H1 (cell line): ENCODE measurements at regions of chrX and their contacts with region 1.

Region 1: GRCh38 chrX:49191033-49191871 is 5.1 kb upstream of the PRICKLE3 start:
- DNase-seq: peak; percentile 74 to 97
- H3K4me3 ChIP-seq: peak overlapping the region; percentile 51 to 87 (median 61)
- H3K27ac ChIP-seq: peak overlapping the region; percentile 77; the same call in 1 of the 2 replicates
- H3K4me1 ChIP-seq: peaks cover 0 to 4% (median 3%) of the 10 kb centered on the region in 4 experiments; a peak in 4 of 7 replicates
- H3K27me3 ChIP-seq: no peaks in the 10 kb centered on the region
- CTCF ChIP-seq: no peak
- EP300 ChIP-seq: no peak
- POLR2A ChIP-seq: peak in 1 of 2 experiments; percentile 77; a peak in 2 of 3 replicates
- RAD21 ChIP-seq: no peak

Region 2: DNA sequence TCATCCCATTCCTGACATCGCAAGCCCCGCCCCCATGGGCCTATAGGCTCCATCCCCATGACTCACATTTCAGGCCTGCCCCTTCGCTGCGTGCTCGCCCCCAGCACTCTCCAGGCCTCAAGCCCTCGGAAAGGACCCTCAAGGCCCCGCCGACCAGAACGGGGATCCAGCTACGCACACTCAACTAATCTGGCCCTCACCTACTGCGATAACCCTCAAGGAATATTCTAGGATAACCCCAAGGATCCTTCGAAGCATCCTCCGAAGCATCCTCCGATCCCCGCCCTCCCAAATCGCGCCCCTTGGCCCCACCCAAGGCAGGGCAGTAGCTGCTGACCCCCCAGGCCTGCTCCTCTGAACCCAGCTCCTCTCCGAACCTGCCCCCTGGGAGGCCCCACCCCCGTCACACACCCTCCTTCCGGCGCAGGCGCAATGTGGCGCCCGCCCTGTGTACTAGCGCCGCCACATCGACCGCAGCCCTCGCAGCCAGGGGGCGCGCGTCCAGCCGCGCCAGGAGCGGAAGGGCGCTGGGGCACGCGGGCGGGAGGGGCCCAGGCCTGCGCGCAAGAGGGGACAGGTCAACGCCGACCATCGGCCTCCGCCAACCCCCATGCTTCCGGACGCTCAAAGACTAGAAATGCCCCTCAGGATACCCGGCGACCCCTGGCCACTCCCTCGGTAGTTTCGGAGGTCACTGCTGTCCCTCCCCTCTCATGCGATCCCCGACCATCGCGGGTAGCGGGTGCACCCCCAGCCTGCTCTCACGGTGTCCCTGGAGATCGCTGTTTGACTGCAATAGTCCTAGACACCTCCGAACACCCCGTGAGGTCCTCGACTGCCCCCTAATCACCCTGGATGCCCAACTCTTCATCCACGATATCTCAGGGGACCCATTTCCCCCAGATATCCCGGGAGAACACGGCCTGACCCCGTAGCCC is 35.1 kb before region 1 on chrX:
- CTCF ChIA-PET with region 1: interaction called, 10 read pairs
- POLR2A ChIA-PET with region 1: interaction called, 3 read pairs
- DNase-seq: peak in 1 of 2 experiments; percentile 78
- H3K4me3 ChIP-seq: peak overlapping the region; percentile 45 to 77 (median 48)
- H3K27ac ChIP-seq: peak overlapping the region; percentile 85; the same call in 1 of the 2 replicates
- H3K4me1 ChIP-seq: peaks cover 0 to 4% (median under 1%) of the 10 kb centered on the region in 4 experiments; a peak in 3 of 7 replicates
- H3K27me3 ChIP-seq: peaks cover 1 to 6% (median 3%) of the 10 kb centered on the region in 4 experiments; a peak in 4 of 7 replicates
- CTCF ChIP-seq: peak in 2 of 3 experiments; percentile 64 to 65; a peak in 3 of 4 replicates
- EP300 ChIP-seq: no peak
- POLR2A ChIP-seq: peak in 1 of 2 experiments; percentile 46; a peak in 1 of 3 replicates
- RAD21 ChIP-seq: peak in 1 of 2 experiments; percentile 35; a peak in 1 of 4 replicates

Region 3: DNA sequence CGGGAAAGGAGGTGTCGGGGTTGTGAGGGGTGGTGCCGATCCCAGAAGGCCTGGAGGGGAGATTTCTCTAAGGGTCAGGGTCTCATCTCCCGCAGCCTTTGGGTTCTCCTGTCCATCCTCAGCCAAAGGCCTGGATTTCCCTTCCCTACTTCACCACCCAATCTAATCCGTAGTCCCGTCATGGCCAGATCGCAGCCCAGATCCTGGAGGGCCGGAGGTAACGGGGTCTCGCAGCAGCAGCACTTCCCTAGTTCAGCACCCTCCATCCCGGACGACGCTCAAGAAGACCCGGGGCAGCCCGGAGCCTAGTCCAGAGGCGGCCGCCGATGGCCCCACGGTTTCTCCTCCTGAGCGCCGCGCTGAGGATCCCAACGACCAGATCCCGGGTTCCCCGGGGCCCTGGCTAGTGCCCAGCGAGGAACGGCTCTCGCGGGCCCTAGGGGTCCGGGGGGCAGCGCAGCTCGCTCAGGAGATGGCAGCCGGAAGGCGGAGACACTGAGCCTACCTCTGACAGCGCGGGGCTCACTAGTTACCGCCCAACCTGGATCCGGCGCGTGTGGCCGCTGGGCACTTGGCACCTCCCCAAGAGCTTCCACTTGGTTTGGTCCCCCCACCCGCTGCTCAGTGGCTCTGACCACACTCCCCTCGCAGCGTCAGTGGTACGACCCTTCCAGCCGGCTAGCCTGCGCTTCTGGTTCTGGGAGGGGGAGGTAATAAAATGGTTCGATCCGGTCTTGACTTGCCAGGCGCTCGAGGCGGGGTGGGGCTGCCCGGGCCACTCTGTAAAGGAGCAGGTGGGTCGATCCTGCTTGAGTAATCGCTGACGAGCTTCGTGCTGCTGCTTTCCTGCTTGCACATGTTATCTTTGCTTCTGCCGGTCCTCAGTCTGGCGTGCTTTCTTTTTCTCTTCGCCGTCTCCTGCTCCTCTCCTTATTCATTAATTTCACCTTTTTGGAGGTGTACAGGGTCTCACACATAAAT is 25.1 kb before region 1 on chrX:
- CTCF ChIA-PET with region 1: interaction called, 14 read pairs
- POLR2A ChIA-PET with region 1: interaction called, 4 read pairs
- DNase-seq: peak; percentile 81 to 83
- H3K4me3 ChIP-seq: peak overlapping the region; percentile 32 to 58 (median 41); a peak in 7 of 8 replicates
- H3K27ac ChIP-seq: no peak overlapping the region
- H3K4me1 ChIP-seq: peaks cover 0 to 12% (median 4%) of the 10 kb centered on the region in 4 experiments; a peak in 4 of 7 replicates
- H3K27me3 ChIP-seq: peaks cover 0 to 8% (median 4%) of the 10 kb centered on the region in 4 experiments; a peak in 4 of 7 replicates
- CTCF ChIP-seq: peak in 2 of 3 experiments; percentile 21 to 37; a peak in 3 of 4 replicates
- EP300 ChIP-seq: peak in 1 of 2 experiments; percentile 99; a peak in 2 of 3 replicates
- POLR2A ChIP-seq: no peak
- RAD21 ChIP-seq: peak; percentile 2 to 23; a peak in 2 of 4 replicates

Region 4: DNA sequence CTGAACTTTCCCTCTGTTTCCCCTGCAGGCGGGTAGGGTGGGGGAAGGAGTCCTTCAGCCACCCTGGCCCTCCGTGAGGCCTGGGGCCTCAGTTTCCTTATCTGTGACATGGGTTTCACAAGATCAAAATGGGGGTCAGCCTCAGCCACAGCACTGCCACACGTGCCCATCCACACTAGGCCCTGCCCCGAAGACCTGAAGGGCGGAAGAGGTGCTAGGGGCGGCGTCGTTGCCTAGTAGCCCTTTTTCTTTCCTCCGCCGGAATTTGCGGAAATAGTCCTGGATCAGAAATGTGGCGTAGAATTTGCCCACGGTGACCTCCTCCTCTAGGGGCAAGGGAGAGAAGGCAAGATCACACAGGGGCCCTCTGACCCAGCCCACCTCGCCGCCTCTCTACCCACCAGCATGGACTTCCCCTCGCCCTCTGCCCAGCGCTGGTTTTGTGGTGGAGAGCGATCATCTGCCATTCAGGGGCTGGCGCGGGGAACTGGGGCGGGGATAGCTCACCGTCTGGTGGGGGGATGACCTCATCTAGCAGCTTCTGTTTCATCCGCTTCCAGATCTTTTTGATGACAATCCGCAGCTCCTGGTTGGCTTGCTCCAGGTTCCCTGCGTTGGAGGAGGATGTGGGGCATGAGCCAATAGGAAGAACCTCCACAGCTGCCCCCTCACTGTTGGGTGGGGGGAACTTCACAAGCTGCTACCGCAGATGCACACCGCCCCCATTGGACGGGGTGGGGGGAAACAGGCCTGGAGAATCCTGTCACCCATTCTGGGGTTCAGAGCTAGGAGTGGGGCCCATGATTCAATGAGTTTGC is 18.4 kb after region 1 on chrX:
- CTCF ChIA-PET with region 1: interaction called, 22 read pairs
- POLR2A ChIA-PET with region 1: interaction called, 4 read pairs
- DNase-seq: no peak
- H3K4me3 ChIP-seq: peak overlapping the region in 1 of 4 experiments; percentile 21; a peak in 1 of 8 replicates
- H3K27ac ChIP-seq: no peak overlapping the region
- H3K4me1 ChIP-seq: peaks cover 0 to 11% (median 2%) of the 10 kb centered on the region in 4 experiments; a peak in 2 of 7 replicates
- H3K27me3 ChIP-seq: no peaks in the 10 kb centered on the region
- CTCF ChIP-seq: peak in 1 of 3 experiments; percentile 5; a peak in 2 of 4 replicates
- EP300 ChIP-seq: no peak
- POLR2A ChIP-seq: no peak
- RAD21 ChIP-seq: peak in 1 of 2 experiments; percentile 19; a peak in 2 of 4 replicates

Region 5: DNA sequence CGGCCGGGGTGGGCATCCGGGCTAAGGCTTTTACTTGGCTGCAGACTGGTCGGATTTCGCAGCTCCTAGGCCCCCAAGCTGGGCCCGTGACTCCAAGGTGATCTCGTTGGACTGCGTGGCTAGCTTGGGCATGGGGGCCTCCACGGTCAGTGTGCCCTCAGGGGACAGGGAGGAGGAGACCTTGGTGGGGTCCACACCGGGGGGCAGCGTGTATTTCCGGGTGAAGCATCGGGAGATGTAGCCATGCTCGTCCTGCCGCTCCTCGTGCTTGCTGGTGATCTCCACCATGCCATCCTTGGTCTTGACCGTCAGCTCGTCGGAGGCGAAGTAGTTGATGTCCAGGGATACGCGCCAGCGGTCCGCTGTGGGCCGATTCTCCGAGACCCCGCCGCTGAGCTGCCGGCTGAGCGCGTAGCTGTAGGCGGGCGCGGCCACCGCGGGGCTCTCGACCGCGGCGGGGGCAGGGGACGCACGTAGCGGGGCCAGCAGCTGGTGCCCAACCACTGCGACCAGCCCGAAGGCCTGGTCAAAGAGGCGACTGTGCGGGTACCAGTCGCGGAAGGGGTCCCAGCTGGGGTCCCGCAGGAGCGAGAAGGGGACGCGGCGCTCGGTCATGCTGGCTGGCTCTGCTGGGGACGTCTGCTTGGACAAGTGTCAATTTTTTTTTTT is 42.8 kb after region 1 on chrX:
- CTCF ChIA-PET with region 1: interaction called, 11 read pairs
- POLR2A ChIA-PET with region 1: no interaction called
- DNase-seq: no peak
- H3K4me3 ChIP-seq: no peak overlapping the region
- H3K27ac ChIP-seq: no peak overlapping the region
- H3K4me1 ChIP-seq: peaks cover 0 to 6% (median 1%) of the 10 kb centered on the region in 4 experiments; a peak in 2 of 7 replicates
- H3K27me3 ChIP-seq: no peaks in the 10 kb centered on the region
- CTCF ChIP-seq: no peak
- EP300 ChIP-seq: no peak
- POLR2A ChIP-seq: no peak
- RAD21 ChIP-seq: no peak

Region 6: GRCh38 chrX:49269010-49269767 is 77.9 kb after region 1 on chrX:
- CTCF ChIA-PET with region 1: interaction called, 3 read pairs
- POLR2A ChIA-PET with region 1: interaction called, 10 read pairs
- DNase-seq: peak; percentile 83 to 85
- H3K4me3 ChIP-seq: peak overlapping the region; percentile 47 to 99 (median 73)
- H3K27ac ChIP-seq: peak overlapping the region; percentile 95
- H3K4me1 ChIP-seq: peaks cover 0 to 14% (median 5%) of the 10 kb centered on the region in 4 experiments; a peak in 4 of 7 replicates
- H3K27me3 ChIP-seq: no peaks in the 10 kb centered on the region
- CTCF ChIP-seq: no peak
- EP300 ChIP-seq: no peak
- POLR2A ChIP-seq: peak; percentile 70 to 85
- RAD21 ChIP-seq: no peak

Region 7: GRCh38 chrX:49282647-49283011 is 91.4 kb after region 1 on chrX:
- CTCF ChIA-PET with region 1: interaction called, 11 read pairs
- POLR2A ChIA-PET with region 1: no interaction called
- DNase-seq: no peak
- H3K4me3 ChIP-seq: no peak overlapping the region
- H3K27ac ChIP-seq: no peak overlapping the region
- H3K4me1 ChIP-seq: no peaks in the 10 kb centered on the region; a peak in 1 of 7 replicates
- H3K27me3 ChIP-seq: no peaks in the 10 kb centered on the region
- CTCF ChIP-seq: peak in 2 of 3 experiments; percentile 17 to 34; a peak in 2 of 4 replicates
- EP300 ChIP-seq: no peak
- POLR2A ChIP-seq: no peak
- RAD21 ChIP-seq: peak in 1 of 2 experiments; percentile 43; a peak in 2 of 4 replicates